ENCODE measurements at regions of chr19 and their contacts with region 1.

Region 1: GRCh38 chr19:18322759-18323460 is at the start of gene LSM4:
- DNase-seq: peak; percentile 98 to 99 (median 98)
- H3K4me3 ChIP-seq: peak within 1 kb of the TSS; percentile 90
- H3K27ac ChIP-seq: peak within 1 kb of the TSS; percentile 37 to 84
- H3K4me1 ChIP-seq: peaks cover 5% of the 10 kb centered on the region
- H3K27me3 ChIP-seq: no peaks in the 10 kb centered on the region
- CTCF ChIP-seq: peak in 1 of 3 donors; percentile 39
- EP300 ChIP-seq: no peak
- POLR2A ChIP-seq: peak; percentile 62
- total RNA-seq, gene LSM4: 45.0 to 121 (median 77.3) TPM

Region 2: GRCh38 chr19:18281082-18282020 is 41.6 kb before region 1 on chr19 and contains the start of gene JUND:
- intact Hi-C with region 1: loop called (anchors 2 to 5 kb)
- DNase-seq: peak; percentile 98 to 99 (median 99)
- H3K4me3 ChIP-seq: peak within 1 kb of the TSS; percentile 93
- H3K27ac ChIP-seq: peak within 1 kb of the TSS; percentile 99 to 100
- H3K4me1 ChIP-seq: peaks cover 16% of the 10 kb centered on the region
- H3K27me3 ChIP-seq: no peaks in the 10 kb centered on the region
- CTCF ChIP-seq: peak in 1 of 3 donors; percentile 32
- EP300 ChIP-seq: peak; percentile 95
- POLR2A ChIP-seq: peak; percentile 97
- total RNA-seq, gene JUND: 163 to 1,260 (median 581) TPM

Region 3: DNA sequence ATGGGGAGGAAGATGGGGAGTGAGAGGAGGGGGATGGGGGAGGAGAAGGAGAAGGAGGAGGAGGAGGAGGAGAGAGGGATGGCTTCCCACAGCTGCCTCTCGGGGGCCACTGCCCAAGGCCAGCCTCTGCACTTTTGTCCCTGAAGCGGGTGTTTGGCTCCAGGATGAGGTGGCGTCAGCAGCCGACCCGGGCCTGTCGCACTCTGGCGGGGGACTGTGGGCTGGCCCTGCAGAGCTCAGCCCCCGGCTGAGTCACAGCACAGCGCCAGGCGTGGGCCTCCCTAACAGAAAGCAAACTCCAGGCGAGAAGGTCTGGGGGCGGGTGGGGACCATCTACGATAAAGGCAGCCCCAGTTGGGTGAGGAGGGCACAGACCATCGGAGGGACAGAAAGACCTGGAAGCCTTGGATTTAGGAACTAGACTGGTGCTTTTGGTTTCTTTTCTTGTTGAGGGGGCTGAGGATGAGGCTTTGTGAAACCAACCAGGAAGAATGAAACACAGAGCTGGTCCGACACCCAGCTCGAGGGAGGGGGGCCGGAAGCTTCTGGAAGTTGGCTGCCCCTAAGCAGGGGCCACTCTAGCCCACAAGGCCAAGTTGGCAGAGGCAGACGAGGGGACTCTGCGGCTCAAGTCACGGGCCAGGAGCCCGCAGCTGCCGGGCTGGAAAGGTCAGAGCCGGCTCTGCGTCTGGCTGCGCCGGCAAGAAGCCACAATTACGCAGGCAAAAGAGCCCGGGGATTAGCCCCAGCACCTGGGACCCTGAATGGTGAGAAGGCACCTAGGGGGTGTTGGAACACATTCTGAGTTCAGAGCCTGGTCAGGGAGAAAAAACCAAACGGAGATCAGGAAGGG is 18.2 kb before region 1 on chr19:
- intact Hi-C with region 1: loop called in 1 of 4 experiments (anchors 2 kb)
- DNase-seq: peak; percentile 87 to 91 (median 89)
- H3K4me3 ChIP-seq: peak overlapping the region; percentile 40
- H3K27ac ChIP-seq: peak overlapping the region; percentile 82 to 98
- H3K4me1 ChIP-seq: peaks cover 18% of the 10 kb centered on the region
- H3K27me3 ChIP-seq: no peaks in the 10 kb centered on the region
- CTCF ChIP-seq: no peak
- EP300 ChIP-seq: no peak
- POLR2A ChIP-seq: peak; percentile 75